Transverse colon (tissue), 4 donors: ENCODE measurements at regions of chr2 and their contacts with region 1.

Region 1: GRCh38 chr2:204325468-204325867 is 219.8 kb upstream of the PARD3B start:
- DNase-seq: peak; percentile 62
- H3K4me3 ChIP-seq: no peak overlapping the region
- H3K27ac ChIP-seq: no peak overlapping the region
- H3K4me1 ChIP-seq: peaks cover 0 to 4% (median 0%) of the 10 kb centered on the region in 4 donors
- H3K27me3 ChIP-seq: no peaks in the 10 kb centered on the region
- CTCF ChIP-seq: peak; percentile 82 to 96 (median 90)
- EP300 ChIP-seq: no peak
- POLR2A ChIP-seq: no peak

Region 2: DNA sequence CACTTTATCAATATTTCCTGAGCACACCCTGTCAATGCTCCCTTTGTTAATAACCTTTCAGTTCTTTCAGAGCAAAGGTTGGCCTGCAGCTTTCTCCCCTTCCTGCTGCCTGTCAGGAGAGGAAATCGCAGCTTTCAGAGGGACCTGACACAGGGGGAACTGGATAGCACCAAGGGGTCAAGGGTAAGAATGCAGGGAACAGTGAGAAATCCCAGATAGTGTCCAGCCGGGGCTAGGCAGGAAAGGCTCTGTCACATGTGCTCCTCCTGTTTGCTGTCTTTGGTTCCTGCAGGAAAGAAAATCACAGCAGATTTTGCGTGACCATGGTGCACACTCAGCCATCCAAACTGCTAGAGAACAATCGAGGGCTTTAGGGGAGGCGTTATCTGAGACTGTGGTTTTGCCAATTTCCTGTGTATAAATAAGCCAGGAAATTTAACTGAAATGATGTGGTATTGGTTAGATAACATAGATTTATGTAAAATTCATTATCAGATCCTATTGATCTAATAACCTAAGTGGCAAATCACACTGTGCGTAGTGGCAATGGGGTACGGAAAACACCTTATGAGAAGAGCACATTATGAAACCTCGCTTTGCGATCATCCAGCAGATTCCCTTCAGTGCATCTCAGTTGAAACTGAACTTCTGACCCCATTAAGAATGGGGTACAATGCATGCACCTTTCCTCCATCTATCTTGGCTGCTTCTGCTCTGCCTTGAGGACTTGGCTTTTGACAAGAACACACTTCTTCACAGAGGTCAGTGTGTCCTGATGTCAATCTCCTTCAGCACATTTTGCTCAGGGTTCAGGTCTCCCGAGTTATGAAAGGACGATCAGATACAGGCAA is 210.9 kb before region 1 on chr2:
- in situ Hi-C with region 1: no loop called
- intact Hi-C with region 1: no loop called
- DNase-seq: no peak
- H3K4me3 ChIP-seq: no peak overlapping the region
- H3K27ac ChIP-seq: no peak overlapping the region
- H3K4me1 ChIP-seq: peaks cover 5 to 51% (median 17%) of the 10 kb centered on the region in 4 donors
- H3K27me3 ChIP-seq: no peaks in the 10 kb centered on the region
- CTCF ChIP-seq: no peak
- EP300 ChIP-seq: no peak
- POLR2A ChIP-seq: no peak

Region 3: DNA sequence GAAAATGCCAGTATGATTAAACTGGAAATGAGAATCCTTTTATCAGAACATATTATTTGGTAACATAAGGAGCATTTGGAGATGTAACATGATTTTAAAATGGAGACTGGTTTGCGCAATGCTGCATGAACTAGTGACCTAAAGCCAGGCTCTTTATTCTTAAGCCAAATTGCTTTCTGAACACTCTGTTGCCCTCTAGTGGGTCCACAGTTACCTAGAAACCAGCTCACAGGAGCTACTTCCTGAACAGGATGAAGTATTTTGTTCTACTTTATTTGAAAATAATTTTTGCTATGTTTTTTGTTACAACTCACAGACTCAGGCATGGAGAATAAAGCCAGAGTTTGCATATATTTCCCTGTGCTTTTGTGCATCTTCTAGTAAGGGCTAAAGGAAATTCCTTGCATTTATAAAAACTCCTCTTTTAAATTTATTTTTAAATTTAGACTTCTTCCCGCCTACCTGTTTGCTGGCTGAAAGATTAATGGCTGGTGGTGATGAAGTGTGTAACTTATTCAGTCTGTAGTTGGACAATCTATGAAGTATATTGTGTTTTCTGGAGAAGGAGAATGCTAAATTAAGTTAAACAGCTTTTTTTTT is 366.5 kb after region 1 on chr2:
- in situ Hi-C with region 1: loop called (anchors 10 to 25 kb)
- intact Hi-C with region 1: loop called (anchors 10 kb)
- DNase-seq: peak; percentile 39
- H3K4me3 ChIP-seq: no peak overlapping the region
- H3K27ac ChIP-seq: no peak overlapping the region
- H3K4me1 ChIP-seq: peaks cover 0 to 19% (median 0%) of the 10 kb centered on the region in 4 donors
- H3K27me3 ChIP-seq: no peaks in the 10 kb centered on the region
- CTCF ChIP-seq: peak; percentile 58 to 76 (median 66)
- EP300 ChIP-seq: no peak
- POLR2A ChIP-seq: no peak

Region 4: DNA sequence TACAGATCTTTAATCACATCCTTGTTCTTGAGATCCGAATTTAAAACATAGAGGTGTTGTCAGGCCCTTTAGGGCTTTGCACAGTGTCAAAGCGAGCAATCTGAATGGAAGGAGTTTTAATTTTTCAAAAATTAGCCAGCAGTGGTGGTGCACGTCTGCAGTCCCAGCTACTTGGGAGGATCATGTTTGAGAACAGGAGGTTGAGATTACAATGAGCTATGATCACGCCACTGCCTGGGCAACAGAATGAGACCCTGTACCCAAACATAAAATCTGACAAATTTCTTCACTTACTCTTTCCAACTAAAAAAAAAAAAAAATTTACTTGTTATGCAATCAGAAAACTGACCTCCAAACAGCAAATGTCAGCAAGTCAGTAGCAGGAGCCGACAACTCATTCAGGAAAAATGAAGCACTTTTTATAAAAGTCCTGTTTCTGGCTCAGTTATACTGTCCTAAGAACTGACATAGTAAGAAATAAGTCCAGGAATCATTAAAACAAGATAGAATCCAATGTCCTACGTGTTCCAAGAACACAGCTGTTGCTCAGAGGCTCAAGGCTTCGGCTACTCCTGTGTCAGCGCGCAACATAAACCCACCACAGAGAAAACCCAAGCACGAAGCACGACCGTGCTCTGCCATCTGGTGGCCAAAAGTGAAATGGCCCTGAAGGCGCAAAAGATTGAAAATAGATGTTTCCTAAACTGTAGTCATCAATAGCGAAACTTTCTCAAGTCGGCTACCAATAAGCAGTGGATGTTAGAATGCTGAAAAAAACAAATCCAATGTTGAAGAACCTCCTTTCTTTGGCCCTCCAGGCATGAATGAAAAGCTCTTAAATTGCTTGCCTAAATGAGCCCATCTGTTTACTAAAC is 1622.4 kb after region 1 on chr2:
- in situ Hi-C with region 1: loop called in 1 of 4 experiments (anchors 25 kb)
- intact Hi-C with region 1: no loop called
- DNase-seq: peak; percentile 68
- H3K4me3 ChIP-seq: peak overlapping the region in 1 of 4 donors; percentile 5
- H3K27ac ChIP-seq: peak overlapping the region in 3 of 4 donors; percentile 12 to 47 (median 32)
- H3K4me1 ChIP-seq: peaks cover 0 to 14% (median 0%) of the 10 kb centered on the region in 4 donors
- H3K27me3 ChIP-seq: no peaks in the 10 kb centered on the region
- CTCF ChIP-seq: peak; percentile 89 to 95 (median 93)
- EP300 ChIP-seq: no peak
- POLR2A ChIP-seq: no peak